Left cardiac atrium (tissue), 4 donors: ENCODE measurements at regions of chr7 and their contacts with region 1.

Region 1: GRCh38 chr7:3154912-3155494 is 111.3 kb upstream of the CARD11 start:
- DNase-seq: no peak
- ATAC-seq: peak in 1 of 2 donors; percentile 53

Region 2: GRCh38 chr7:2864999-2865670 is 289.9 kb before region 1 on chr7:
- intact Hi-C with region 1: loop called in 1 of 2 experiments (anchors 5 kb)
- DNase-seq: peak; percentile 73
- ATAC-seq: peak; percentile 22 to 38

Region 3: GRCh38 chr7:2886900-2887299 is 268.1 kb before region 1 on chr7:
- intact Hi-C with region 1: loop called (anchors 5 to 10 kb)
- DNase-seq: no peak
- ATAC-seq: peak; percentile 78 to 87